PC-9 (cell line): ENCODE measurements at regions of chr1 and their contacts with region 1.

Region 1: GRCh38 chr1:233364695-233365539 is 37.4 kb downstream of the MAP3K21 start:
- DNase-seq: peak in 1 of 2 experiments; percentile 36
- H3K4me3 ChIP-seq: no peak overlapping the region
- H3K27ac ChIP-seq: no peak overlapping the region
- H3K4me1 ChIP-seq: peaks cover 26% of the 10 kb centered on the region
- H3K27me3 ChIP-seq: no peaks in the 10 kb centered on the region
- CTCF ChIP-seq: peak; percentile 85

Region 2: DNA sequence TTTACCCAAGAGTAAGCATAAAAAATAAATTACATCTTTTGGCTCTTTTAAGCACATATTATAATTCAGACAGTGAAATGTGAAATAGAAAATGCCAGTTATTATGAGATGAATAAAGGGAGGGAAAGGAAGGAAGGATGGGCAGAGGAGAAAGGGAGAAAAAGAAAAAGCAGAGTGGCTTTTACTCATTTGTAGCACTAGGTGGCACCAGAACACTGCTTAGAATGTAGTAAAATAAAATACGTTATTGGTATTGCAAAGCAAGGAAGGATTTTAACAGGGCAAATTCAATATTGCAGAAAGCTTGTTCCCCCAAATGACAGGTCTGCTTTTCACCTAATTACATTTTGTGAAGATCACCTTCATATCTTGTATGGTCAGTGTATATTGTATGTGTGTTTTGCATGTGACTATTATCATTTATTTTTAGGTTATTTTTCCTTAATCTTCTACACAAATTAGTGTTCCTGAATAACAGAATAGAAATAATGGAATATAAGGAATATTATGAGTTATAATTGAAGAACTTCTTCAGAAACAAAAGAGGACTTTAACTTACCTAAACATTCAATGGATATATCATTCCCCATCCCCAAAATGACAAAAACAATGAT is 60.3 kb before region 1 on chr1:
- CTCF ChIA-PET with region 1: interaction called, 5 read pairs
- POLR2A ChIA-PET with region 1: no interaction called
- intact Hi-C with region 1: loop called (anchors 5 kb)
- DNase-seq: no peak
- H3K4me3 ChIP-seq: no peak overlapping the region
- H3K27ac ChIP-seq: no peak overlapping the region
- H3K4me1 ChIP-seq: no peaks in the 10 kb centered on the region
- H3K27me3 ChIP-seq: no peaks in the 10 kb centered on the region
- CTCF ChIP-seq: peak; percentile 78

Region 3: GRCh38 chr1:233326811-233327650 is 37.9 kb before region 1 on chr1:
- CTCF ChIA-PET with region 1: interaction called, 7 read pairs
- POLR2A ChIA-PET with region 1: interaction called, 6 read pairs
- intact Hi-C with region 1: loop called (anchors 2 kb)
- DNase-seq: peak; percentile 83 to 99
- H3K4me3 ChIP-seq: peak overlapping the region; percentile 53
- H3K27ac ChIP-seq: peak overlapping the region; percentile 4; the same call in 1 of the 2 replicates
- H3K4me1 ChIP-seq: peaks cover 25% of the 10 kb centered on the region
- H3K27me3 ChIP-seq: no peaks in the 10 kb centered on the region
- CTCF ChIP-seq: no peak

Region 4: GRCh38 chr1:233394860-233395717 is 30.2 kb after region 1 on chr1:
- CTCF ChIA-PET with region 1: no interaction called
- POLR2A ChIA-PET with region 1: no interaction called
- intact Hi-C with region 1: loop called (anchors 1 kb)
- DNase-seq: peak; percentile 30 to 60
- H3K4me3 ChIP-seq: no peak overlapping the region
- H3K27ac ChIP-seq: no peak overlapping the region
- H3K4me1 ChIP-seq: no peaks in the 10 kb centered on the region
- H3K27me3 ChIP-seq: no peaks in the 10 kb centered on the region
- CTCF ChIP-seq: peak; percentile 89

Region 5: DNA sequence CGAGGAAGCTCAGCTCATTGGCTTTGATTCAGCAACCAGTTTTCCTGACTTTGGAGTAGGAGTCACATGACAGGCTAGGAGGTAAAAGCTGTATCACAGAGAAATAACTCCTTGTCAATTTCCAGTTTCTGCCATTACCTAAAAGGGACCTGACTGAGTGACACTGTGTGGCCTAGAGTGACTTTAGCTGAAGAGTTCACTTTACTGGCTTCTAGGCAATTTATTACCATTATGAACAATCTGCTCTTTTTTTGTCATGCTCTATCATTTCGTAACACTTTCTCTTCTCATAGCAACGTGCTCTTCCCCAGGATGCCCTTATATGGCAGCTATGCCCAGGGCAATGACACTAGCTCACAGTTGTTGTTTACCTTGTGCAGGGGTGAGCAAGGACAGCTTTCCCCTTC is 356.2 kb after region 1 on chr1:
- CTCF ChIA-PET with region 1: no interaction called
- POLR2A ChIA-PET with region 1: interaction called, 26 read pairs
- intact Hi-C with region 1: no loop called
- DNase-seq: peak; percentile 31 to 78
- H3K4me3 ChIP-seq: no peak overlapping the region
- H3K27ac ChIP-seq: peak overlapping the region; percentile 49
- H3K4me1 ChIP-seq: peaks cover 34% of the 10 kb centered on the region
- H3K27me3 ChIP-seq: no peaks in the 10 kb centered on the region
- CTCF ChIP-seq: no peak

Region 6: GRCh38 chr1:234065794-234066447 is 701.0 kb after region 1 on chr1:
- CTCF ChIA-PET with region 1: no interaction called
- POLR2A ChIA-PET with region 1: no interaction called
- intact Hi-C with region 1: loop called (anchors 1 kb)
- DNase-seq: peak in 1 of 2 experiments; percentile 75
- H3K4me3 ChIP-seq: no peak overlapping the region
- H3K27ac ChIP-seq: no peak overlapping the region
- H3K4me1 ChIP-seq: no peaks in the 10 kb centered on the region
- H3K27me3 ChIP-seq: no peaks in the 10 kb centered on the region
- CTCF ChIP-seq: peak; percentile 83